Left cardiac atrium (tissue), 4 donors: ENCODE measurements at regions of chr15 and their contacts with region 1.

Region 1: DNA sequence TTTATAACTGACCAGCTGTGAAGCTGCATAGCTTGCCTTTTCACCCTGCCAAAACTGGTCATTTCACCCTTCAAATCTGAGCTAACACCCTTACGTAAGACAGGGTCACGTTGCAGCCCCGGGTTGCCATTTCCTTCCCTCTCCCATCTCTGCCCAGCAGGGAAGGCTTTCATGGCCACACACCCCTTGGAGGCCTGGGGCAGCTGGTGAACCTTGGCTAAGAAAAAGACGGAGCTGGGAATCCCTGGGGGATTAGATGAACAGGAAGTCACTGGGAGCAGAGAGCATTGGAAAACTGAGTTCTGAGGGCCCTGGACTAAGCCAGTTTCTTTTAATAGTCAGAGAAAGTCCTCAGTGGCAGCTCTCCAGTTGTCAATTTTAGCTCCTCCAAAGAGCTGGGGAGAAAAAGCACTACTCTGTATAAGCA is 67.8 kb downstream of the TTC23 start:
- DNase-seq: peak; percentile 31
- ATAC-seq: peak; percentile 77 to 91

Region 2: GRCh38 chr15:99104788-99105513 is 76.6 kb before region 1 on chr15 and contains the start of gene SYNM:
- intact Hi-C with region 1: loop called in 1 of 2 experiments (anchors 2 kb)
- DNase-seq: peak; percentile 80
- ATAC-seq: peak; percentile 88 to 89
- total RNA-seq, gene SYNM: 302 to 329 TPM

Region 3: DNA sequence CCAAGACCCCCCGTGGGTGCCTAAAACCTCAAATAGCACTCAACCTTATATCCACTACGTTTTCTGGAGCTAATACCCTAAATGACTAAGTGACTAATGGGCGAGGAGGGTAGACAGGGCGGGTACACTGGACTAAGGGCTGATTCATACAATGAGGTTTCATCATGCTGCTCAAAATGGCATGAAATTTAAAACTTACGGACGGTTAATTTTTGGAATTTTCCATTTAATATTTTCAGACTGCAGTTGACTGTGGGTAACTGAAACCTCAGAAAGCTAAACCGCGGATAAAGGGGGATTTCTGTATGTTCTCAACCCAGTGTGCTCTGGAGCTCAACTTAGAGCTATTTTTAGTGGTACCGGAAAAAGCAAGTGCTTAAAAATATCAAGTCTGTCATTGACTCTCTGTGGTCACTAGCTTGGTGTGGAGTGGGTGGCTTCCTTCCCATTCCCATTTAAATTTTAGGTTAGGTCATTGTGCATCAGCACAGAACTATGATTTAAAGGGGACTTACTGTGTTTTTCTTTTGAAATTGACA is 142.6 kb after region 1 on chr15:
- intact Hi-C with region 1: no loop called
- DNase-seq: no peak
- ATAC-seq: peak; percentile 70 to 72